CD4-positive, alpha-beta memory T cell (primary cell): ENCODE measurements at regions of chr16 and their contacts with region 1.

Region 1: DNA sequence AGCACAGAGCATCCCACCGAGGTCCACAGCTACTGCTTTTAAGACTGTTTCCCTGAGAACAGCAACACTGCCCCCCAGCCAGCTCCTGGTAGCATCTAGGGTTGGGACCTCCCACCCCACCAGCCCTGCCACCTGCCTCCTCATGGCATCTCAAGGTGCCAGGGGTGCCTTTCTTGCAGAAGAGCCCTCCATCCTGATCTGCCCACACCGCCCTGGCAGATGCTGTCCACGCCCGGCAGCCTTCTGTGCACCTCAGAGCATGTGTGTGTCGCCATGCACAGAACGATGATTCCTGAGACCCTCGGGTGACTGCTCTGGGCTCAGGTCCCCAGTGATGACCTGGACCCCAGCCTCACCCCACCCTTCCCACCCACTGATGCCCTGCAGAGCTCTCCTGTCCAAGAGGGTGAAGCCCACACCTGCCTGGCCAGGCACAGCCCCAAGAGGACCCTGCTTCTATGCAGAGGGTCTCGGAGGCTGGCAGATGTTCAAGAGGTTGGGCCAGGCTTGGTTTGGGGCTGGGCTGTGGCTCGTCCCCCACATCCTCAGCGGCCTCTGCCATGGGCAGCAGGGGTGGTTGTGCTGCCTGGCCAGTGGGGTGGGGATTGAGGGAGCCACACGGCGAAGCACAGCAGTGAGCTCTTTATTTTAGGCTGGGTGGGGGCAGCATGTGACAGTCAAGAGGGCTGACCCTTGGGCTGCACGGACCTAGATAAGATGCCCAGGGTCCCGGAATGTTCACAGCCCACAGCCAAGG is 5.2 kb upstream of the SPATA2L start:
- DNase-seq: no peak
- H3K4me3 ChIP-seq: no peak overlapping the region
- H3K4me3 Mint-ChIP-seq: peak overlapping the region in 1 of 8 donors; percentile 43
- H3K27ac ChIP-seq: no peak overlapping the region
- H3K27ac Mint-ChIP-seq: no peak overlapping the region
- H3K4me1 ChIP-seq: peaks cover 13% of the 10 kb centered on the region
- H3K4me1 Mint-ChIP-seq: peaks cover 3 to 21% (median 12%) of the 10 kb centered on the region in 4 donors
- H3K27me3 ChIP-seq: no peaks in the 10 kb centered on the region
- H3K27me3 Mint-ChIP-seq: no peaks in the 10 kb centered on the region

Region 2: DNA sequence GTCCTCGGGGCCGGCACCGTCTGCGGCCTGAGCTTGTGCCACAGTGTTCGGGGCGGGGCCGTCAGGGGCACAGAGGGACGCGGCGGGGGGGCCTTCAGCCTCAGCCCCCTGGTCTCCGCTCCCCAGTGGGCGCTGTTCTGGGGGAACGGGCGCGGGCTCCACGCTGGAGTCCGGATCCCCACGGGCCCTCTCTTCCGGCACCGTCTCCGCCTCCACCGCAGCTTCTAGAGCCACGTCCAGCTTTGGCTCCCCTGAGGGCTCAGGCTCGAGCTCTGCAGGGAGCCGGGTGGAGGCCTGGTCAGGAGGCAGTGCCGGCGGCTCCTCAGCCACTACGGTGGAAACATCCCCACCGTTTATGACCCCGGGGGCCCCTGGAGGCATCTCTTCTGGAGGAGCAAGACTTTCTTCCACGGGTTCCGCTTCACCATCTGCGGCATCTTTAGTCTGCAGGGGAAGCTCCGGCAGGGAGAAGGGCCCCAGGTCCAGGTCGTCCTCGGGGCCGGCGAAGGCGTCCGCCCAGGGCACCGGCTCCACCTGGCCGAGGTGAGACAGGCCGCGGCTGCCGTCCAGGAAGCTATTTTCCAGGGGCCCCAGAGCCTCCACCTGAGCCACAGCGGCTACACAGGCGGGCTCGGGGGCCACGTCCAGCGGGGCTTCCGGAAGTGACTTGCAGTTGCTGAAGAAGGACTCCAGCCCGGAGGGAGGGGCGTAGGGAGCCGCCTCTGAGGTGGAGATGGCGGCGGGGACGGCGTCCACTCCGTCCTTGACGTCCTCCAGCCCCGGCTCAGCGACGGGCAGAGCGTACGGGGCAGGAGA is 426.8 kb before region 1 on chr16:
- CTCF ChIA-PET with region 1: no interaction called
- POLR2A ChIA-PET with region 1: no interaction called
- intact Hi-C with region 1: no loop called
- DNase-seq: peak in 1 of 5 donors; percentile 13
- H3K4me3 ChIP-seq: no peak overlapping the region
- H3K4me3 Mint-ChIP-seq: no peak overlapping the region
- H3K27ac ChIP-seq: no peak overlapping the region
- H3K27ac Mint-ChIP-seq: no peak overlapping the region
- H3K4me1 ChIP-seq: no peaks in the 10 kb centered on the region
- H3K4me1 Mint-ChIP-seq: peaks cover 0 to 4% (median under 1%) of the 10 kb centered on the region in 4 donors
- H3K27me3 ChIP-seq: no peaks in the 10 kb centered on the region
- H3K27me3 Mint-ChIP-seq: no peaks in the 10 kb centered on the region

Region 3: GRCh38 chr16:89737341-89738071 is 30.8 kb after region 1 on chr16:
- CTCF ChIA-PET with region 1: interaction called, 42 read pairs
- POLR2A ChIA-PET with region 1: interaction called, 10 read pairs
- intact Hi-C with region 1: loop called (anchors 1 kb)
- DNase-seq: peak; percentile 76 to 82 (median 81)
- H3K4me3 ChIP-seq: no peak overlapping the region
- H3K4me3 Mint-ChIP-seq: peak overlapping the region; percentile 20 to 82 (median 56)
- H3K27ac ChIP-seq: peak overlapping the region; percentile 31
- H3K27ac Mint-ChIP-seq: peak overlapping the region; percentile 74 to 92 (median 87)
- H3K4me1 ChIP-seq: peaks cover 49% of the 10 kb centered on the region
- H3K4me1 Mint-ChIP-seq: peaks cover 23 to 69% (median 39%) of the 10 kb centered on the region in 4 donors
- H3K27me3 ChIP-seq: no peaks in the 10 kb centered on the region
- H3K27me3 Mint-ChIP-seq: no peaks in the 10 kb centered on the region

Region 4: DNA sequence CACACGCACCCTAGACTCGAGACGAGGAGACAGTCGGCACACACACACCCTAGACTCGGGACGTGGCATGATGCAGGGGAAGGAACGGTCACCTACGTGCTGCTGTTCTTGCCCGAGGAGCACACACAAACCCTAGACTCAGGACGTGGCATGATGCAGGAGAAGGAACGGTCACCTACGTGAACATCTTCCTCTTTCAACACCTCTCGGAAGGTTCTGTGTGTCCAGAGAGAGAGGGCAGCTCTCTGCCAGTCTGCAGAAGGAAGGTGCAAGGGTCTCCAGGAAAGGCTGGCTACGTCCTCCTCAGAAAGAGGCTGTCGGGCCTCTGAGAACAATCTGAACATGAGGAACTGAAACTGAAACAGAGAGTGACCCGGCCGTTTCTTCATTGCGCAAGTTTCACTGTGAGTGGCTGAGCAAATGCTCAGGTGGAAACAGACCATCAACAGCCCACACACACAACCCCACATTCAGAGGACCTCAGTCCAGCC is 58.1 kb after region 1 on chr16:
- CTCF ChIA-PET with region 1: interaction called, 10 read pairs
- POLR2A ChIA-PET with region 1: interaction called, 5 read pairs
- intact Hi-C with region 1: no loop called
- DNase-seq: peak; percentile 26 to 67 (median 35)
- H3K4me3 ChIP-seq: peak overlapping the region; percentile 49 to 56
- H3K4me3 Mint-ChIP-seq: peak overlapping the region; percentile 87 to 95 (median 92)
- H3K27ac ChIP-seq: peak overlapping the region; percentile 75
- H3K27ac Mint-ChIP-seq: peak overlapping the region; percentile 81 to 98 (median 96)
- H3K4me1 ChIP-seq: peaks cover 50% of the 10 kb centered on the region
- H3K4me1 Mint-ChIP-seq: peaks cover 32 to 53% (median 45%) of the 10 kb centered on the region in 4 donors
- H3K27me3 ChIP-seq: no peaks in the 10 kb centered on the region
- H3K27me3 Mint-ChIP-seq: no peaks in the 10 kb centered on the region

Region 5: DNA sequence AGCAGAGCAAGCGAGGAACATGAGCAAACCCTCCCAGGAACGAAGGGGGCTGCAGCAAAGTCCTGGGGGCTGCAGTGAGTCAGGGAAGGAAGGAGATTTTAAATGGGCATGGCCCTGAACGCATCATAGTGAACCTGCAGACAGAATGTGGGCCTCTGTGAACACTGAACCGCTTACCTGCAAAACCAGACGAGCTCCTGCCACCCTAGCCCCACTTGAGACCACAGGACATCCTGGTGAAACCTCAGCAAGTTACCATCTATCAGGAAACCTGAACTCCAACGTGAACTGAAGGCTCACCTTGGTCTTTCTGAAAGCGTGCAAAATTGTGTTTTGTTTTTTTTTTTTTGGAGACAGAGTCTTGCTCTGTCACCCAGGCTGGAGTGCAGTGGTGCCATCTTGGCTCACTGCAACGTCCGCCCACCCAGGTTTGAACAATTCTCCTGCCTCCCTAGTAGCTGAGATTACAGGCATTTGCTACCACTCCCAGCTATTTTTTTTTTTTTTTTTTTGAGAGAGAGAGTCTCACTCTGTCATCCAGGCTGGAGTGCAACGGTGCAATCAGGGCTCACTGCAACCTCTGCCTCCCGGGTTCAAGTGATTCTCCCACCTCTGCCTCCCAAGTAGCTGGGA is 79.0 kb after region 1 on chr16:
- CTCF ChIA-PET with region 1: interaction called, 293 read pairs
- POLR2A ChIA-PET with region 1: interaction called, 8 read pairs
- intact Hi-C with region 1: no loop called
- DNase-seq: peak; percentile 68 to 83 (median 71)
- H3K4me3 ChIP-seq: no peak overlapping the region
- H3K4me3 Mint-ChIP-seq: peak overlapping the region in 7 of 8 donors; percentile 13 to 82 (median 67)
- H3K27ac ChIP-seq: no peak overlapping the region
- H3K27ac Mint-ChIP-seq: peak overlapping the region; percentile 43 to 95 (median 77)
- H3K4me1 ChIP-seq: peaks cover 33% of the 10 kb centered on the region
- H3K4me1 Mint-ChIP-seq: peaks cover 24 to 42% (median 29%) of the 10 kb centered on the region in 4 donors
- H3K27me3 ChIP-seq: no peaks in the 10 kb centered on the region
- H3K27me3 Mint-ChIP-seq: no peaks in the 10 kb centered on the region

Region 6: GRCh38 chr16:89795676-89796075 is 89.0 kb after region 1 on chr16:
- CTCF ChIA-PET with region 1: interaction called, 293 read pairs
- POLR2A ChIA-PET with region 1: interaction called, 12 read pairs
- intact Hi-C with region 1: loop called (anchors 1 kb)
- DNase-seq: no peak
- H3K4me3 ChIP-seq: no peak overlapping the region
- H3K4me3 Mint-ChIP-seq: no peak overlapping the region
- H3K27ac ChIP-seq: no peak overlapping the region
- H3K27ac Mint-ChIP-seq: no peak overlapping the region
- H3K4me1 ChIP-seq: no peaks in the 10 kb centered on the region
- H3K4me1 Mint-ChIP-seq: peaks cover 6 to 14% (median 8%) of the 10 kb centered on the region in 4 donors
- H3K27me3 ChIP-seq: no peaks in the 10 kb centered on the region
- H3K27me3 Mint-ChIP-seq: no peaks in the 10 kb centered on the region

Region 7: DNA sequence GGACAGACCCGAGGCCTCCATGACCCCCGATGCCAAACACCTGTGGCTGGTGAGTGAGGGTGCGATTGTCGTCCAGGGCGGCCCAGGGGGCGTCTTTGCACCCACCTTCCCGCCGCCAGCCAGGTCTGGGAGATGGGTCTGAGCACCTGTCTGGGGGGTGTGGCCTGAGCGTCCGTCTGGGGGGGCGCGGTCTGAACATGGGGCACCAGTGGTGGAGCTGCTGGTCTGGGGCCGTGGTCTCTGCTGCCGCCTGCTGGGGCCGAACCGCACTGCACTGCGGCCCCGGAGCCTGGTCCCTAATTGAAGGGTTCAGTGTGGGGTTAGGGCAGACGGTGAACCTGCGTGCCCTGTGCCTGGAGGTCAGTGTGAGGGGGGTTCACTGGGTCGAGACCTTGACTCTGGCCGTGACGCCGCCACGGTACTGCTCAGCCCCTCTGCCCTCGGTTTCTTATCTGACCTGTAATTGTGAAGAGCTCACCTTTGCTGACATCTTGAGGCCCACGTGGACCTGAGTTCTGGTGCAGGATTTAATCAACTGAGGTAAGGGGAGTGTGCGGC is 154.1 kb after region 1 on chr16:
- CTCF ChIA-PET with region 1: interaction called, 138 read pairs
- POLR2A ChIA-PET with region 1: interaction called, 21 read pairs
- intact Hi-C with region 1: loop called (anchors 1 kb)
- DNase-seq: peak; percentile 71 to 80 (median 74)
- H3K4me3 ChIP-seq: no peak overlapping the region
- H3K4me3 Mint-ChIP-seq: peak overlapping the region in 2 of 8 donors; percentile 30 to 39
- H3K27ac ChIP-seq: no peak overlapping the region
- H3K27ac Mint-ChIP-seq: peak overlapping the region in 5 of 7 donors; percentile 44 to 85 (median 80)
- H3K4me1 ChIP-seq: peaks cover 41% of the 10 kb centered on the region
- H3K4me1 Mint-ChIP-seq: peaks cover 27 to 42% (median 34%) of the 10 kb centered on the region in 4 donors
- H3K27me3 ChIP-seq: no peaks in the 10 kb centered on the region
- H3K27me3 Mint-ChIP-seq: no peaks in the 10 kb centered on the region

Region 8: DNA sequence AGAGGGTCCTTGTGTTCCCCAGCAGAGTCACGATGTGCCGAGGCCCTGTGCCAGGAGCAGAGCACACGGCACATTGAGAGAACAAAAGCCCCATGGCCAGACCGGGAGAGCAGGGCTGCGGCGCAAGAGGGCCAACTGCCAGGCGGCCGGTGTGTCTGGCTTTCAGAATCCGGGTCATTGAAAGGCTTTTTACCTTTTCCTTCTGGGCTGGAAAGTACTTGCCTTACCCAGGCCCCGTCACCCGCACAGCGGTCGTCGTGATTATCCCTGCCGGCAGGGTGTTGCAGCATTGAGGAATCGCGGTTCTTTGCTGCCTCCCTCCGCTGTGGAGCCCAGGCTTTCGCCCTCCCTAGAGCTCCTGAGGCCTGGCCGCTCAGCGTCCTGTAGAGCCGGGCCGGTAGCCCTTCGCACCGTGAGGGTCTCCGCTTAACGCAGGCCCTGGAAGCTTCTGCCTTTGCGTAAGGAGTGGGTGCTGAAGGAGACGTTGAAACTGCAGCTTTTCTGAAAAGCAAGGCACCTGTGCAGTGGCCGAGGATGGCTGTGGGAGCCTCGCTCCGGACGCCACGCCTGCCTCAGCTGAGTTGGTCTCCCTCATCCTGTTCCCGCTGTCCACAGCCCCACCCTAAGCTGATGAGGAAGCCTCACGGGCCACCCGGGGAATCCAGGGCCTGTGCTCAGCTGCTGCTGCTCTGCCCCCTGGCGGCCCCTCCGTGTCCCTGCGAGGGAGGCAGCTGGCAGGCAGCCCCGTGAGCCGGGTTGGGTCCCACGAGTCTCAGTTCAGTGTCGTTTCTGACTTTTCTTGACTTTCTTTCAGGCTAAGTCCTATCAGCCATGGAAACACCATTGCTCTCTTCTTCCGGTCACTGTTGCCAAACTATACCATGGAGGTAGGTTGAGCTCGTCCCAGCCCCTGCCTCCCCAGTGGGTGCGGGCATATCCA is 203.4 kb after region 1 on chr16:
- CTCF ChIA-PET with region 1: interaction called, 33 read pairs
- POLR2A ChIA-PET with region 1: interaction called, 3 read pairs
- intact Hi-C with region 1: no loop called
- DNase-seq: peak; percentile 61 to 73 (median 65)
- H3K4me3 ChIP-seq: no peak overlapping the region
- H3K4me3 Mint-ChIP-seq: no peak overlapping the region
- H3K27ac ChIP-seq: no peak overlapping the region
- H3K27ac Mint-ChIP-seq: peak overlapping the region in 3 of 7 donors; percentile 59 to 78 (median 73)
- H3K4me1 ChIP-seq: peaks cover 3% of the 10 kb centered on the region
- H3K4me1 Mint-ChIP-seq: peaks cover 3 to 23% (median 5%) of the 10 kb centered on the region in 4 donors
- H3K27me3 ChIP-seq: no peaks in the 10 kb centered on the region
- H3K27me3 Mint-ChIP-seq: no peaks in the 10 kb centered on the region